ENCODE measurements at regions of chr3 and their contacts with region 1.

Region 1: GRCh38 chr3:141738022-141738890 is at the start of gene RNF7:
- DNase-seq: peak; percentile 98
- ATAC-seq: peak; percentile 92
- H3K4me3 Mint-ChIP-seq: peak within 1 kb of the TSS; percentile 91
- H3K27ac Mint-ChIP-seq: peak within 1 kb of the TSS; percentile 99
- H3K4me1 Mint-ChIP-seq: peaks cover 39% of the 10 kb centered on the region
- H3K27me3 Mint-ChIP-seq: no peaks in the 10 kb centered on the region
- total RNA-seq, gene RNF7: 38.0 to 67.2 TPM

Region 2: DNA sequence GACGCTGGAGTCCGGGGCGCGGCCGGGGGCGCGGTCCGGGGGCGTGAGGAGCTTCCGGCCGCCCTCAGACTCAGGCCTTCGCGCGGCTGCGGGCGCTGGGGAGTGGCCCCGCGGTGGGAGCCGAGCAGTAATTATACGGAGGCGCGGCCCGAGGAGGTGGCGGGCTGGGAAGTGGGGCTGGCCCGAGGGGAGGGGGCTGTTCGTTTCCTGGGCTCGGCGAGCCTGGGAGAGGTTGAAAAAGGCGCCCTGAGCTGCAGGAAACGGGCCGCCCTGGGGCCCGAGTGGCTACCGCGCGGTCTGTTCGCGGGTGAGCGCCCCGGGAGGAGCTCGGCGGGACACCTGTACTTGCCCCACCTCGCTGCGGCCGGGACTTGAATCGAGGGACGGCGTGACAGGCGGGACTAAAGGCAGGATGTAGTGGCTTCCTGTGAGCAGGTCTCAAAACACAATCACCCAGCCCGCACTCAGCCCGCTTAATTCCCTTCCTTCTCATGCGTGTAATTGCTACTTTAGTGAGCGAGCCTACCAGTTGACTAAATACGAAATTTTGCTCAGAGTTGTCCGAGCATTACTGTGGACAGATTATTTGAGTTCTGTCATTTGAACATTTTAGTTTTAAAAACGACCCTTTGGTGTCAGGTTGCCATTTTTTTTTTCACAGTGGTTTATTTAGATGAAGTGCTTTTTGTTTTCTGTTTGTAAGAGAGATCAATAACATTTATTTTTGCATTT is 250.6 kb before region 1 on chr3:
- CTCF ChIA-PET with region 1: interaction called, 3 read pairs
- POLR2A ChIA-PET with region 1: no interaction called
- intact Hi-C with region 1: loop called in 1 of 2 experiments (anchors 1 kb)
- DNase-seq: peak; percentile 93
- ATAC-seq: peak; percentile 69
- H3K4me3 Mint-ChIP-seq: peak overlapping the region; percentile 77
- H3K27ac Mint-ChIP-seq: peak overlapping the region; percentile 94
- H3K4me1 Mint-ChIP-seq: peaks cover 64% of the 10 kb centered on the region
- H3K27me3 Mint-ChIP-seq: no peaks in the 10 kb centered on the region

Region 3: DNA sequence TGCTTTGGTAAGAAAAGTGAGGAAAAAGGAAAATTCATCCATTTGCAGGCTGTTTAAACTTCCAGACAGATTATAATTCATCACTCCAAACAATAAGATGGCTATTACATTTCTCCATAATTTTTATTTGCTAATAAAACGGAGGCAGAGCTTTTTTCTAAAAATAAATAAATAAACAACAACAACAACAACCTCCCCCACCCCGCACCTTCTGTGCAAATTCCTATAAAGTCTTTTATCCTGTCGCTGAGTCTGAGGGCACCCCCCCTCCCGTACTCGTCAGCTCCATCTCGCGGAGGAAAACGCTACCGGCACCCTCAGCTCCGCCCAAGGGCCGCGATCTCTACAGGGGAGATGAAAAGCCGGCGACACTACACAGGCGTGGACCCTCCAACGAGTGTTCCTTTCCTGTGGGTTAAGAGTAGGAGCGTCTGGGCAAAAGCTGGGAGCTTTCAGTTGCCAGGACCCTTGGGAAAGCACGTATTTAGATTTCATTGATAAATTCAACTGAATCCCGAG is 137.2 kb after region 1 on chr3:
- CTCF ChIA-PET with region 1: interaction called, 39 read pairs
- POLR2A ChIA-PET with region 1: interaction called, 3 read pairs
- intact Hi-C with region 1: loop called (anchors 1 kb)
- DNase-seq: peak; percentile 92
- ATAC-seq: peak; percentile 73
- H3K4me3 Mint-ChIP-seq: peak overlapping the region; percentile 93
- H3K27ac Mint-ChIP-seq: peak overlapping the region; percentile 91
- H3K4me1 Mint-ChIP-seq: peaks cover 23% of the 10 kb centered on the region
- H3K27me3 Mint-ChIP-seq: no peaks in the 10 kb centered on the region

Region 4: GRCh38 chr3:142148792-142149672 is 410.8 kb after region 1 on chr3 and contains the start of gene TFDP2:
- CTCF ChIA-PET with region 1: interaction called, 3 read pairs
- POLR2A ChIA-PET with region 1: no interaction called
- intact Hi-C with region 1: loop called (anchors 2 to 10 kb)
- DNase-seq: peak; percentile 92
- ATAC-seq: peak; percentile 100
- H3K4me3 Mint-ChIP-seq: peak within 1 kb of the TSS; percentile 86
- H3K27ac Mint-ChIP-seq: peak within 1 kb of the TSS; percentile 89
- H3K4me1 Mint-ChIP-seq: peaks cover 26% of the 10 kb centered on the region
- H3K27me3 Mint-ChIP-seq: no peaks in the 10 kb centered on the region
- total RNA-seq, gene TFDP2: 23.3 to 40.7 TPM

Region 5: DNA sequence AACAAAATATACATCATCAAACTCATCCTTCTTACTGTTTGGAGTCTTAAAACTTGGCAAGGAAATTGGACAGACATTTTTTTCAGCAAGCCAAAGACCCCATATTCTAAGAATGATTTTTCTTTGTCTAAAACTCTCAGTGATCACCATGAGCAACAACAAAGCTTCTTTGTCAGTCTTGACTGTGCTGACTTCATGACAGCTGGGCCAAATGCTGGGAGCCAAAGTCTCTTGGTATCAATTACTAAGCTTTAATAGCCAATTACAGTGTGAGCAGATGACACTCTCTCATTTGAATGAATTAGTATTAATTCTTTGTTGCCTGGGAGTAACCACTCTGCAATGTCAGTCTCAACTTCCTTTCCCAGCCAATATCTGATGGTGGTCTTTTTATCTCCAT is 535.2 kb after region 1 on chr3:
- CTCF ChIA-PET with region 1: no interaction called
- POLR2A ChIA-PET with region 1: no interaction called
- intact Hi-C with region 1: no loop called
- DNase-seq: no peak
- ATAC-seq: no peak
- H3K4me3 Mint-ChIP-seq: no peak overlapping the region
- H3K27ac Mint-ChIP-seq: no peak overlapping the region
- H3K4me1 Mint-ChIP-seq: peaks cover 14% of the 10 kb centered on the region
- H3K27me3 Mint-ChIP-seq: no peaks in the 10 kb centered on the region

Region 6: DNA sequence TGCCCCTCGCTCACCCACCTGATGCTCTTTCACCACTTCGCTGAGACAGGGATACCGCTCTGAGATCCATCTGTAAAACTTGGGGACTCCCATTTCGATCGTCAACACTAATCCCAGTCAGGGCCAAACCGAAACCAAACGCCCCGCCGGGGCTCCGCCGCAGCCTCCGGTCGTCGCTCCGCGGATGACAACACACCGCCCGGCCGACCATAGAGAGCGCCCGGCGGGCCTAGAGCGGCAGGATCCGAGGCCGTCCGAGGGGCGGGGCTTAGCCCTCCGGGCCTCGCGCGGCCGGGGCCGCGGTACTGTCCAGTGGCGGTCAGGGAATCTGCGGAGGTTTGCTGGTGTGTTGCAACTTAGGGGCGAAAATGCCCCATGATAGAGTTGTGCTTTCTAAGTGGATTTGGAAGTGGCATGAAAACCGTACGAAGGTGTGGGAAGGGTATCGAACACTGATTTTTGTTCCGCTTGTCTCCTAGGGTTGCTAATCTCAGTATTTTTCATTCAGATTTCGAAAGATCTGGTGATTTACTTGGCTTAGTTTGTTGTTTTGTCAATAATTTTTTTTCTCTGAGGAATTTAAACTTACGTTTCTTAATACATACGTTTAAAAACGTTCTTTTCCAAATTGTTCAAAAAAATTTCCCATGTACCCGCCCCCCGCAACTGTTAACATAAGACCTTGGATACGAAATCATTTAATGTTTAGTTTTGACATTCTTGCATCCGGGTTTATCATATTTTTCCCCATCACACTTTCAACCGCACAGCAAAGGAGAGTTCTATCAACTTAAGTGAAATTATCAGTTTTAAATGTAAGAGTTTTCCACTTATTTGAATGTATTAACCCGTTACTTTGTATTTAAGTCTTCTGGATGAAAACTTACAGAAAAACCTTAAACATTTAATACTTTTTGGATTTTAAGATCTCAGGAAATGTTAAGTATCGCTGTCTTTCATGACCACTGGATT is 709.9 kb after region 1 on chr3 and contains the start of gene XRN1:
- CTCF ChIA-PET with region 1: no interaction called
- POLR2A ChIA-PET with region 1: no interaction called
- intact Hi-C with region 1: loop called (anchors 1 to 2 kb)
- DNase-seq: peak; percentile 98
- ATAC-seq: peak; percentile 85
- H3K4me3 Mint-ChIP-seq: peak within 1 kb of the TSS; percentile 95
- H3K27ac Mint-ChIP-seq: peak within 1 kb of the TSS; percentile 98
- H3K4me1 Mint-ChIP-seq: peaks cover 32% of the 10 kb centered on the region
- H3K27me3 Mint-ChIP-seq: no peaks in the 10 kb centered on the region
- total RNA-seq, gene XRN1: 54.2 to 117 TPM